ENCODE measurements at regions of chr5 and their contacts with region 1.

Region 1: DNA sequence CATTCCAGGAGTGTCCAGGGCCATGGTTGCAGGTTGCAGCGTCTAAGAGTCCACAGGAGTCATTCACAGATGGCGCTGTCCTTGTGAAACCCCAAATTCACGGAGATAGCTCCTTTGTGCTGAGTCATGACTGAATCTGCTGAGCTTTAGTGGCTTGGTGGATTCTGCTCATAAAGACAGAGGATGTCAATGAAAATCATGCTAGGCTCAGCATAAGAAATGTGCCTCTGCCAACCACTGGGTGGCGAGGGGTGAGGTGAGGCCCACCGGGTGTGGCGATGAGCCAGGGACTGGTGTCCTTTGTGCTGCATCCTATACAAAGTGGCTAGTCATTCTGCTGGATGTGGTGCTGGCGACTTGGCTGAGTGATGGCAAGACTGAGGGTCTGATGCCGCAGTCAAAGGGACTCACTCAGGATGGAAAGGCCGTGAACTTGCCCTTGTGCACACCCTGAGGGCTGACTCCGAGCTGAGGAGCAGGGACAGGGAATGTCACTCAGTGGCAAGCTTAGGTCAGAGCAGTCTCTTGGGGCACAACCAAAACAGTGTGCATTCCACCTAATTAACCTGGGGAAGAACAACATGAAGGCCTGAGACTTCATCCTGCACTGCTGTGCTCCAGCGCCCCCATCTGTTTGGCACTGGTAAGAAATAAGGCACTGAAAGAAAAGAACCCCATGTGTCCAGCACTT is 71.5 kb downstream of the DAP start:
- DNase-seq: peak; percentile 64
- H3K4me3 Mint-ChIP-seq: no peak overlapping the region
- H3K27ac Mint-ChIP-seq: no peak overlapping the region
- H3K4me1 Mint-ChIP-seq: peaks cover 21% of the 10 kb centered on the region
- H3K27me3 Mint-ChIP-seq: no peaks in the 10 kb centered on the region

Region 2: DNA sequence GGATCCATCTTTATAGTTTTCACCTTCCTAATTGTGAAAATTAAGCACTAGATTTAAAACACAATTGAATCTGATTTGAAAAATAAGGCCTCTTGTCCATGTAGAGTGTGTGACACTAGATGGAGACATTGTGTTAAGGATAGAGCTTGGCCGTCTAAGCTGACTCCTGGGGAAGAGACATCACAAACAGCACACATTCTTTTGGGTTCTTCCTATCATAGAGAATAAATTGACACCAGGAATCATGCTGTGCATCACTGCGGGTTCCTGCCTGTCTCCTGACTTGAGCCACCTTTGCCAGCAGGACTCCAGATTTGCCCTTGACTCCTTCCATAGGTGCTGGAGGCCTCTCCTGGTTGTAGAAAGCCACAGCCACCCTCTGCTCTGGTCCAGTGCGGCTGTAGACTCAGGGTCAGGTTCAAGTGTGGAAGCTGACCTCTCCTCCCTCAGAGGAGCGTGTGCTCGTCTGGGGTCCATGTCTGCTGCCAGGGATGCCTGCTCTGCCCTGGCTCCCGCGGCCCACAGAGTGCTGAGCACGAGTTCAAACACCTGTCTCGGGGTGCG is 236.7 kb before region 1 on chr5:
- CTCF ChIA-PET with region 1: interaction called, 9 read pairs
- POLR2A ChIA-PET with region 1: no interaction called
- intact Hi-C with region 1: loop called (anchors 1 kb)
- DNase-seq: no peak
- H3K4me3 Mint-ChIP-seq: no peak overlapping the region
- H3K27ac Mint-ChIP-seq: no peak overlapping the region
- H3K4me1 Mint-ChIP-seq: peaks cover 5% of the 10 kb centered on the region
- H3K27me3 Mint-ChIP-seq: no peaks in the 10 kb centered on the region

Region 3: GRCh38 chr5:10655161-10655971 is 34.2 kb before region 1 on chr5:
- CTCF ChIA-PET with region 1: no interaction called
- POLR2A ChIA-PET with region 1: no interaction called
- intact Hi-C with region 1: no loop called
- DNase-seq: no peak
- H3K4me3 Mint-ChIP-seq: no peak overlapping the region
- H3K27ac Mint-ChIP-seq: no peak overlapping the region
- H3K4me1 Mint-ChIP-seq: no peaks in the 10 kb centered on the region
- H3K27me3 Mint-ChIP-seq: no peaks in the 10 kb centered on the region

Region 4: GRCh38 chr5:10701567-10702039 is 12.1 kb after region 1 on chr5:
- CTCF ChIA-PET with region 1: interaction called, 18 read pairs
- POLR2A ChIA-PET with region 1: no interaction called
- intact Hi-C with region 1: no loop called
- DNase-seq: peak; percentile 27
- H3K4me3 Mint-ChIP-seq: no peak overlapping the region
- H3K27ac Mint-ChIP-seq: no peak overlapping the region
- H3K4me1 Mint-ChIP-seq: peaks cover 38% of the 10 kb centered on the region
- H3K27me3 Mint-ChIP-seq: no peaks in the 10 kb centered on the region

Measured in activated CD4-positive, alpha-beta memory T cell treated with anti-CD3 and anti-CD28 coated beads for 36 hours (primary cell).